Activated T-helper 1 cell treated with anti-CD3 and anti-CD28 coated beads, Interleukin-12 subunit alpha, Interleukin-12 subunit beta, Interleukin-2, Interleukin-4 antibody, amounts not matched to agents 30 ng/mL and 10 ng/mL and 1 ng/mL, durations not matched to agents 14 hours and 24 hours and 36 hours (primary cell): ENCODE measurements at regions of chr12 and their contacts with region 1.

Region 1: GRCh38 chr12:121209624-121210572 is at the start of gene P2RX4:
- DNase-seq: peak; percentile 87
- H3K4me3 Mint-ChIP-seq: peak within 1 kb of the TSS; percentile 85
- H3K27ac Mint-ChIP-seq: peak within 1 kb of the TSS; percentile 94
- H3K4me1 Mint-ChIP-seq: peaks cover 33% of the 10 kb centered on the region
- H3K27me3 Mint-ChIP-seq: peaks cover 1% of the 10 kb centered on the region
- total RNA-seq, gene P2RX4: 22.8 and 25.3 TPM in 2 replicates

Region 2: DNA sequence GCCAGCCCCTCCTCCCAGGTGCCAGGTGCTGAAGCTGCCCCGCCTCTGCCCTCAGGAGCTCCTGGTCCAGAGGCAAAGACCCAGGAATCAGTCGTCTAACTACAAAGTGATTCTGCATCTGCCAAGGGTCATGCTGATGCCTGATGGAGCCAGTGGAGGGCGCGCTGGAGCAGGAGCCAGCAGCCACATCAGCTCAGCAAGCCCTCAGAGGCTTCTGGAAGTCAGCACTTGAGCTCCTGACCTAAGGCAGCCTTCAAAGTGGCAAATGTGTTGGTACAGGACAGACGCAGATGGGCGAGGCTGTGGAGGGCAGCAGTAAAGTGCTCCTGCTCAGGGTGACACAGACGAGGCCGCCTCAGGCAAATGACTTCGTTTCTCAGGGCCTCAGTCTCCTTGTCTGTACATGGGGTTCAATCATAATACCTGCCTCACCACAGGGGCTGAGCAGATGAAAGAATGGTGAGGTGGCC is 204.5 kb before region 1 on chr12:
- intact Hi-C with region 1: no loop called
- DNase-seq: peak; percentile 32
- H3K4me3 Mint-ChIP-seq: no peak overlapping the region
- H3K27ac Mint-ChIP-seq: no peak overlapping the region
- H3K4me1 Mint-ChIP-seq: peaks cover 4% of the 10 kb centered on the region
- H3K27me3 Mint-ChIP-seq: no peaks in the 10 kb centered on the region

Region 3: GRCh38 chr12:121038861-121039666 is 170.8 kb before region 1 on chr12 and contains the start of gene OASL:
- intact Hi-C with region 1: loop called (anchors 5 kb)
- DNase-seq: peak; percentile 54
- H3K4me3 Mint-ChIP-seq: peak within 1 kb of the TSS; percentile 91
- H3K27ac Mint-ChIP-seq: peak within 1 kb of the TSS; percentile 84
- H3K4me1 Mint-ChIP-seq: peaks cover 51% of the 10 kb centered on the region
- H3K27me3 Mint-ChIP-seq: peaks cover 12% of the 10 kb centered on the region
- total RNA-seq, gene OASL: 2.4 and 3.1 TPM in 2 replicates

Region 4: DNA sequence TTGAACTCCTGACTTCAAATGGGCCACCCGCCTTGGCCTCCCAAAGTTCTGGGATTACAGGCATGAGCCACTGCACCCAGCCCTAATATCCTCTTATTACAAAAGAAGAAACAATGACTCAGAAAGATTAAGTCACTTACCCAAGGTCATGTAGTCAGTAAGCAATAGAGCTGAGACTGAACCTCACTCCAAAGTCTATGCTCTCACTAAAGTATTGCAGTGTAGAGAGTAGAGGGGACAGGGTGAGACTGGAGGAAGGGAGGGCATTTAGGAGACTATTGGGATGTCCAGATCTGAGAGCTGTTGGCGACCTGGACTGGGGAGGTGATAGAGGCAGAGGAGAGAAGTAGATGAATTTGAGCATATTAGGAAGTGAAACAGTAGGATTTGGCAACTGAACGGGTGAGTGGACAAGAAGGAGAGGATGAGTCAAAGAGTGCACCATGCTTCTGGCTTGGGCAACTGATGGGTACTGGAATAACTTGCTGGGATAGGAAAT is 65.4 kb before region 1 on chr12:
- intact Hi-C with region 1: loop called (anchors 2 kb)
- DNase-seq: no peak
- H3K4me3 Mint-ChIP-seq: peak overlapping the region; percentile 58
- H3K27ac Mint-ChIP-seq: peak overlapping the region; percentile 81
- H3K4me1 Mint-ChIP-seq: peaks cover 27% of the 10 kb centered on the region
- H3K27me3 Mint-ChIP-seq: no peaks in the 10 kb centered on the region

Region 5: GRCh38 chr12:121190523-121191031 is 19.3 kb before region 1 on chr12:
- intact Hi-C with region 1: no loop called
- DNase-seq: no peak
- H3K4me3 Mint-ChIP-seq: no peak overlapping the region
- H3K27ac Mint-ChIP-seq: no peak overlapping the region
- H3K4me1 Mint-ChIP-seq: peaks cover 12% of the 10 kb centered on the region
- H3K27me3 Mint-ChIP-seq: peaks cover 4% of the 10 kb centered on the region

Region 6: GRCh38 chr12:121223292-121224285 is 13.7 kb after region 1 on chr12:
- intact Hi-C with region 1: loop called (anchors 1 kb)
- DNase-seq: peak; percentile 36
- H3K4me3 Mint-ChIP-seq: peak overlapping the region; percentile 37
- H3K27ac Mint-ChIP-seq: peak overlapping the region; percentile 89
- H3K4me1 Mint-ChIP-seq: peaks cover 44% of the 10 kb centered on the region
- H3K27me3 Mint-ChIP-seq: no peaks in the 10 kb centered on the region

Region 7: GRCh38 chr12:121255433-121255832 is 45.5 kb after region 1 on chr12:
- intact Hi-C with region 1: no loop called
- DNase-seq: no peak
- H3K4me3 Mint-ChIP-seq: no peak overlapping the region
- H3K27ac Mint-ChIP-seq: no peak overlapping the region
- H3K4me1 Mint-ChIP-seq: peaks cover 6% of the 10 kb centered on the region
- H3K27me3 Mint-ChIP-seq: no peaks in the 10 kb centered on the region

Region 8: DNA sequence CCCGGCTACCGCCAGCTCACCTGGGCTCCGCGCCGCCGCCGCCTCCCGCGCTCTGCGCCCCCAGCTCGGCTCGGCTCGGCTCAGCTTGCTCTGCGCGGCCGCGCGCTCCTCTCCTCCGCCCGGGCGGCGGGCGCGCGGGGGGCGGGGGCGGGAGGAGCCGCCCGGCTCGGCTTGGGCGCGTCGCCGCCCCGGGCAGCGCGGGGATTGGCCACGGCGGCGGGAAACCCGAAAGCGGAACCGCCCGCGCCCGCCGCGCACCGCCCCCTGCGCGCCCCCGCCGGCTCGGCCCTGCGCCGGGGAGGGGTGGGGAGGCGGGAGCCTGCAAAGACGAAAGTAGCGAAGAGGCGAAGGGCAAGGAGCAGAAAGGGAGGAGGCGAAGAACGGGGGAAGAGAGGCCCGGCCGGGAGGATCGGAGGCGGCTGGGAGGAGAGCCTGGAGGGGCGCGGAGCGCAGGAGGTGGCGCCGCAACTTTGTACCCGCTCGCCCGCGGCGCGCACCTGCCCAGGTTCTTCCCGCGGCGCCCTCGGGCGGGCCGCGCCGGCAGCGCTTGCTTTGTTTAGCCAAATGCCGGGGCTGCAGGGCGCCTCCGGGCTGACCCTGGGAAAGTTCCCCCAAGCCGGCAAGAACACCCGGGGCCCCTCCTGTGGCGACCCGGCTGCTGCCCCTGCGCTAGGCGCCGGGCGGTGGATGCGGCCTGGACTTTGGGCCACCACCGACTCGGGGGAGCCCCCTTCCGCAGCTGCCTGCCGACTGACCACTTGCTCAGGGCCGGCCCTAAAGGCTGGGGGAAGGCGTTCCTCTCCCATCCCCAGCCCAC is 86.9 kb after region 1 on chr12 and contains the start of gene CAMKK2:
- intact Hi-C with region 1: loop called (anchors 1 kb)
- DNase-seq: peak; percentile 91
- H3K4me3 Mint-ChIP-seq: peak within 1 kb of the TSS; percentile 94
- H3K27ac Mint-ChIP-seq: peak within 1 kb of the TSS; percentile 88
- H3K4me1 Mint-ChIP-seq: peaks cover 35% of the 10 kb centered on the region
- H3K27me3 Mint-ChIP-seq: no peaks in the 10 kb centered on the region
- total RNA-seq, gene CAMKK2: 38.1 and 41.0 TPM in 2 replicates